ENCODE measurements at regions of chr4 and their contacts with region 1.

Region 1: GRCh38 chr4:93897559-93897958 is 69.0 kb downstream of the ATOH1 start:
- DNase-seq: no peak
- H3K4me3 ChIP-seq: no peak overlapping the region
- H3K27ac ChIP-seq: no peak overlapping the region
- H3K4me1 ChIP-seq: no peaks in the 10 kb centered on the region
- H3K27me3 ChIP-seq: no peaks in the 10 kb centered on the region
- CTCF ChIP-seq: no peak
- EP300 ChIP-seq: no peak
- POLR2A ChIP-seq: no peak

Region 2: DNA sequence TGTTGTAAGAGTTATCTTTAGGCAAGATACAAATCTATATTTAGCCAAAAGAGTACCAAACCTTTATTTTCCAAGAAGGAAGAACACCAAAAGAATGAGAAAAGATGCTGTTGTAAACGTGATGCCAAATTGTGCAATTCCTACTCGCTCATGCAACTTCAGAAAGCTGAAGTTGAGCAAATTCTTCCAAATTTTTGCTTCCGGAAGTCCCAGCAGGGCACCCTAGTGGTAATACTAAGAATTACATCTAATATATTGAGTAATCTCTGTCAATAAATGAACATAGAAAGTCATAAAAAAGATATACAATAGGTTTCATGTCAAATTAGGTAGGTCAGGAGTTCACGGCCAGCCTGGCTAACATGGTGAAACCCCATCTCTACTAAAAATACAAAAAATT is 274.1 kb after region 1 on chr4:
- intact Hi-C with region 1: loop called in 1 of 4 experiments (anchors 5 kb)
- DNase-seq: no peak
- H3K4me3 ChIP-seq: no peak overlapping the region
- H3K27ac ChIP-seq: no peak overlapping the region
- H3K4me1 ChIP-seq: no peaks in the 10 kb centered on the region
- H3K27me3 ChIP-seq: no peaks in the 10 kb centered on the region
- CTCF ChIP-seq: no peak
- EP300 ChIP-seq: no peak
- POLR2A ChIP-seq: no peak

Region 3: GRCh38 chr4:94228493-94229216 is 331.1 kb after region 1 on chr4:
- intact Hi-C with region 1: no loop called
- DNase-seq: no peak
- H3K4me3 ChIP-seq: no peak overlapping the region
- H3K27ac ChIP-seq: no peak overlapping the region
- H3K4me1 ChIP-seq: no peaks in the 10 kb centered on the region
- H3K27me3 ChIP-seq: no peaks in the 10 kb centered on the region
- CTCF ChIP-seq: no peak
- EP300 ChIP-seq: no peak
- POLR2A ChIP-seq: no peak